Posterior cingulate gyrus (tissue), 11 donors: ENCODE measurements at regions of chr6 and their contacts with region 1.

Region 1: DNA sequence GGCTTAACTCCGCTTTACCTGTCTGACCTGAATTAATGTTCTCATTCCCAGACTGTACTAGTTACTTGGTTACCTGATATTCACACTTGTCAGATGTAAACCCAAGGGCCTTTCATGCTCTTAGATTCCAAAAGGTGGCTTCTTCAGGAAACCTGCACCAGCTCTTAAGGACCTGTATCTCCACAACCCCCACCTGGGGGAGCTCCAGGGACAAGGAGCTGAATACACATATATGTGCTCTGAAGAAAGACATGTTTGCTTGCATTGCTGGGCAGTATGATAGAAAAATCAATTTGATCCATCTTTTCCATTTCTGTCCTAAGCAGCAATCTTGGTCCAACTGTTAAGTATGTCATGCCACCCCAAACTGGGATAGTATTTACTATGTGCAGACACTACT is 64.8 kb upstream of the POU3F2 start:
- DNase-seq: peak in 4 of 10 donors; percentile 5 to 79 (median 18)

Region 2: DNA sequence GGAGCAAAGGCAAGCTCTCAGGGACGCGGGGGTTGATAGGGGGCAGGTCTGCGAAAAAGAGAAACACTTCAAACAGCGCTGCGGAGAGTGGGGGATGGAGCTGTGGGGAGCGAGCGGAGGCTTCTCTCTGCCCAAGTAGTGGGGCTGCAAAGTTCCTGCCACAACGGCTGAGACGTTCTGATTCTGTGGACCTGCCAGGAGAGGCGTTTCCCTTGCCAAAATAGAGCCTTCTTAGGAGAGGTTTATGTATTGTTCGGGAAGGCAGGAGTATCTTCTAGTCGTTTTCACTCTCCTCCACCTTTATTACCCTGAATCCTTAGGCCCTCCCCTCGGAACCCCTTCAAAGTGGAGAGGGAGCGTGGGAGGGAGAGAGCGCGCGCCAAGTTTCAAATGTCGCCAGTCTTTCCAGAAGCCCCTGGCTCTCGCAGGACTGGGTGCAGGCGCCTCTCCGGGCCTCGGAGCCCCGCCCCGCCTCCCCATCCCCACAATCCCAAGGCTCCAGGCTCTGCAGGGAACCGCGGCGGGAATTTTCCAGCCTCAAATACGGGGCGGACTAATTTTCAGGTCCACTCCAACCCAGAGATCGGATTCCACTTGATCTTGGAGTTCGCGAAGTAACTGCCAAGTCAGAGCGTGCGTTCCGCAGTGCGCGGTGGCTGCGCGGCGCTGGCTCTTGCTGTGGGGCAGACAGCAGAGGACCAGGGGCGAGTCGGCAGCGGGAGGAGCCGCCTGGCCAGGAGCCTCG is 54.8 kb after region 1 on chr6:
- intact Hi-C with region 1: loop called (anchors 10 kb)
- DNase-seq: peak in 7 of 10 donors; percentile 22 to 91 (median 44)

Region 3: DNA sequence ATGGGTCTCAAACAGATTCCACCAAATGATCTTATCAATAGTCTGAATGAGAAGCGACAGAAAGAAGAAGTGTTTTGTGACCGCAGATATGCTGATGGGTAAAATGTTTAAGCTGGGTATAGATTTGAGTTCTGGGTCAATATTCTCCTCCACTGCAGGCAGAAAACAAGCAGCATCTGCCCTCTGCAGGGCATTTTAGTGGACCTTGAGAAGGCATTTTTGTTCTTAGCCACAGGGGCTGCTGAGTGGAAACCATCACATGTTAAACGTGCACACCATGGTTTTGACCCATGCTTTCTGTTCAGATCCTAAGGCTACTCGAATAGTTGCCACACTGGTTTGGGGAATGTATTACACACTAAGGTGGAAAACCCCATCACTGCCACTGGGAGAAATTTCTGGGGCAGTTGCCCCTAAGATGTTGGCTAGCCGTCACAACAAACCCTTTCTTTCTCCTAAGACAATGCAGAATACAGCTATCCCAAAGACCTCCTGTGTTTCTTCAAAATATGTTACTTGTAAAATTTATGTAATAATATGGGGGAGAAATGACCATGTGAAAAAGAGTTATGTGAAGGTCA is 70.3 kb after region 1 on chr6:
- intact Hi-C with region 1: no loop called
- DNase-seq: peak in 6 of 10 donors; percentile 28 to 91 (median 49)

Region 4: DNA sequence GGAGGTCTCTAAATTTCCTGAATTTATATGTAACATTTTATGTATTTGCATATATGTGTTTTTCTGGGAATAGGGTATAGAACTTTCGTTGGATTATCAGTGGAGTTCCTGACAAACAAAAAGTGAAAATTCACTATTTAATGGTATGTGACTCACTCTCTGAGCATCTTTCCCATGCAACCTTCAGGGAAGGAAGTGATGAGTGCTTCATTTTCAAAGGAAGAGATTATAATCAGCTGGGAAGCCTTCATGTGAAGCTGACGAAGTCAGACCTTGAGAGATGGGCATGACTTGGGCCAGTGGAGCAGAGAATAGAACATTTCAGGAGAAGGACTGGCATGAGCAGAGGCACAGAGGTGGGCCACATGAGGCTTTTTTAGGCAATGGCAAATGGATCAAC is 507.2 kb after region 1 on chr6:
- intact Hi-C with region 1: no loop called
- DNase-seq: no peak